Vagina (tissue), 2 donors: ENCODE measurements at regions of chr22 and their contacts with region 1.

Region 1: GRCh38 chr22:36619797-36620399 is 83.7 kb downstream of the CACNG2 start:
- DNase-seq: no peak
- H3K4me3 ChIP-seq: no peak overlapping the region
- H3K27ac ChIP-seq: no peak overlapping the region
- H3K4me1 ChIP-seq: no peaks in the 10 kb centered on the region
- H3K27me3 ChIP-seq: no peaks in the 10 kb centered on the region
- CTCF ChIP-seq: no peak
- POLR2A ChIP-seq: no peak

Region 2: GRCh38 chr22:37121887-37122591 is 502.1 kb after region 1 on chr22:
- intact Hi-C with region 1: loop called (anchors 10 kb)
- DNase-seq: no peak
- H3K4me3 ChIP-seq: no peak overlapping the region
- H3K27ac ChIP-seq: no peak overlapping the region
- H3K4me1 ChIP-seq: no peaks in the 10 kb centered on the region
- H3K27me3 ChIP-seq: no peaks in the 10 kb centered on the region
- CTCF ChIP-seq: no peak
- POLR2A ChIP-seq: no peak